Activated T-helper 2 cell treated with anti-CD3 and anti-CD28 coated beads, Interferon-gamma antibody, Interleukin-2, Interleukin-4, amounts not matched to agents 10 μg/mL and 5 μg/mL and 100 μg/mL, durations not matched to agents 14 hours and 24 hours and 36 hours (primary cell): ENCODE measurements at regions of chr18 and their contacts with region 1.

Region 1: GRCh38 chr18:58687871-58688308 is 16.6 kb downstream of the MALT1 start:
- DNase-seq: peak; percentile 67
- H3K4me3 Mint-ChIP-seq: peak overlapping the region; percentile 50
- H3K27ac Mint-ChIP-seq: peak overlapping the region; percentile 86
- H3K4me1 Mint-ChIP-seq: peaks cover 34% of the 10 kb centered on the region
- H3K27me3 Mint-ChIP-seq: no peaks in the 10 kb centered on the region

Region 2: DNA sequence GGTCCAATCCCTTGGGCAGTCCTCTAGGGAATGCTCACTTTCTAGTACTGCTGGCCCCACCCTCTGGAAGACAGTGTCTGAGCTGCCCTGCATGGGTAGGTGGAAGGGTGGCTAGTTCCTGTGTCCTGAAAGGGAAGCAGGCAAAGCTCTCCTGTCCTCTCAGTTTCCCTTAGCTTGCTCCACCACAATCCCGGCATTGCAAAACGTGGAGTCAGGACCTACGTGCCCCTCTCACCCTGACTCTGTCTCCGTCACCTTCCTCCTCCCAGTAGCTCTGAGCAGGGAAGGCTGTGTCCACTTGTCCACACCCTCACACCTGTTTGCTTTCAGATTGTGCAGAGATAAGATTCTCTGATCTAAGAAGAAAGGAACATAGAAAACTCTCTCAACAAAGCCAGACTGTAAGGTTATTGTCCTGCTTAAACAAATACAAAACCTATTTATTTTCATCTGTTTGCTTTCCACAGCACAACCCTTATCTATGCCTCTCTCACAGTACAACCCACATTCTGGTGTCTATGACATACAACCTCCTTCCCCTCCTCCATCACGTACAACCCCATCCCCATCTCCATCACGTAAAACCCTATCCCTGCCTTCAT is 138.1 kb before region 1 on chr18:
- intact Hi-C with region 1: no loop called
- DNase-seq: no peak
- H3K4me3 Mint-ChIP-seq: no peak overlapping the region
- H3K27ac Mint-ChIP-seq: no peak overlapping the region
- H3K4me1 Mint-ChIP-seq: peaks cover 30% of the 10 kb centered on the region
- H3K27me3 Mint-ChIP-seq: peaks cover 6% of the 10 kb centered on the region

Region 3: GRCh38 chr18:58639751-58640427 is 48.0 kb before region 1 on chr18:
- intact Hi-C with region 1: no loop called
- DNase-seq: no peak
- H3K4me3 Mint-ChIP-seq: no peak overlapping the region
- H3K27ac Mint-ChIP-seq: no peak overlapping the region
- H3K4me1 Mint-ChIP-seq: peaks cover 24% of the 10 kb centered on the region
- H3K27me3 Mint-ChIP-seq: peaks cover 4% of the 10 kb centered on the region

Region 4: GRCh38 chr18:58699551-58699950 is 11.7 kb after region 1 on chr18:
- intact Hi-C with region 1: no loop called
- DNase-seq: no peak
- H3K4me3 Mint-ChIP-seq: no peak overlapping the region
- H3K27ac Mint-ChIP-seq: no peak overlapping the region
- H3K4me1 Mint-ChIP-seq: peaks cover 33% of the 10 kb centered on the region
- H3K27me3 Mint-ChIP-seq: no peaks in the 10 kb centered on the region

Region 5: GRCh38 chr18:58761241-58761969 is 73.5 kb after region 1 on chr18:
- intact Hi-C with region 1: loop called (anchors 5 kb)
- DNase-seq: no peak
- H3K4me3 Mint-ChIP-seq: no peak overlapping the region
- H3K27ac Mint-ChIP-seq: no peak overlapping the region
- H3K4me1 Mint-ChIP-seq: peaks cover 20% of the 10 kb centered on the region
- H3K27me3 Mint-ChIP-seq: peaks cover 30% of the 10 kb centered on the region

Region 6: DNA sequence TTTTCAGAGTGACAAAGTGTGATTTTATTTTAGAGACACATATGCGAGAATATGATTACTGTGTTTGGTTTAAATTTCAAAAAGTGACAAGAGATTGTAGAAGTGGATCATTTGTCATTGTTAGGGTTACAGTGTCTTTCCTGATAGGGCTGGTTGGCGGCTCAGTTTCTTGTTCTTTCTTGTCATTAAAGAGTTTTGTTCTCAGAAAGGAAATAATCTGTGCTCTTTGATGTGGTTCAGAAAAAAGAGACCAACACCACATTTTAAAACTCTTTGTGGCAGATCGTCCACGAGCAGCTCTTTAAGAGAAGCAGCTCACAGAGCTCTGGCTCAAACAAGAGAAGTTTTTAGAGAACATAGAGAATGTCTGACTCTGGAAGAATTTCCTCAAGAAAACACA is 131.2 kb after region 1 on chr18:
- intact Hi-C with region 1: no loop called
- DNase-seq: no peak
- H3K4me3 Mint-ChIP-seq: no peak overlapping the region
- H3K27ac Mint-ChIP-seq: no peak overlapping the region
- H3K4me1 Mint-ChIP-seq: peaks cover 7% of the 10 kb centered on the region
- H3K27me3 Mint-ChIP-seq: peaks cover 28% of the 10 kb centered on the region